Dorsolateral prefrontal cortex (tissue), 120 donors: ENCODE measurements at regions of chr1 and their contacts with region 1.

Region 1: DNA sequence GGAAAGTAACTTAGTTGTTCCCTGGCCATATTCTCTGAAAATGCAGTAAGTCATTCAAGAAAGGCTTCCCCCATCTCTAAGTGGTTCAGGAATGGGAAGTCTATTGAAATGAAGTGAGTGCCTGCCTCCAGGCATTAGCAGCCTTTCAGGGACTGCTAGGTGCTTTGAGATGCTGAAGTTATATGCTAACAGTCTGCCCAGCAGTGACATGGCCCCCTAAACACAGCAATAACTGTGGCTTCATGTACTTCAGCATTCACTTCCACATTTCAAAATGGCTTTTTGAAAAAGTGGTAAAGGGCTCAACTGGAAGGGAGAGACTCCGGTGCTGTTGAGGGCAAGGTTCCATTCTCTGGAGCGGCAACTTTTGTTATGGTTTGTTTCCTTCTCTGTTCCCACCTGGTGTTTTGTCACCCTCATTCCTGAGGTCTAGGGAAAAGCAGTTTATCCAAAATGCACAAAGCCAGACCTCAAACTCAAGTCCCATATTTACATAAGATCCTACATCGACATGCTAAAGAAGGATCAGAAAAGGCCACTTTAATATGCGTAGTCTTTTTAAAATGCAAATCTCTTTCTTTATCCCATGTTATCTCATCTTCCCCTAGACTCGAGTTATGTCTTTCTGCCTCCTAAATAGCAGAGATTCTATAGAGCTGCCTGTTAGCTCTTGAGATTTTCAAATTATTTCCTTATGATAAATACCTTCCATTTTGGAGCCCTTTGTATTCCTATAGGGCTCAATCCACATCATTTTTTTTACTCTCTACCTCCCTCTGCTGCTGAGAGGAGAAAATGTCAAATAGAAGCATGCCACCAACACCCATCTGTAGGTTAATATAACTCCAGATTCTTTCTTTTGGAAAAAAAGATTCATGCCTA is 34.2 kb upstream of the LRRC8C start:
- DNase-seq: no peak
- H3K4me3 ChIP-seq: peak overlapping the region in 2 of 59 donors; percentile 9 to 12
- H3K27ac ChIP-seq: peak overlapping the region in 56 of 59 donors; percentile 1 to 78 (median 53)
- H3K27me3 ChIP-seq: no peaks in the 10 kb centered on the region
- CTCF ChIP-seq: peak; percentile 69 to 93 (median 84)

Region 2: DNA sequence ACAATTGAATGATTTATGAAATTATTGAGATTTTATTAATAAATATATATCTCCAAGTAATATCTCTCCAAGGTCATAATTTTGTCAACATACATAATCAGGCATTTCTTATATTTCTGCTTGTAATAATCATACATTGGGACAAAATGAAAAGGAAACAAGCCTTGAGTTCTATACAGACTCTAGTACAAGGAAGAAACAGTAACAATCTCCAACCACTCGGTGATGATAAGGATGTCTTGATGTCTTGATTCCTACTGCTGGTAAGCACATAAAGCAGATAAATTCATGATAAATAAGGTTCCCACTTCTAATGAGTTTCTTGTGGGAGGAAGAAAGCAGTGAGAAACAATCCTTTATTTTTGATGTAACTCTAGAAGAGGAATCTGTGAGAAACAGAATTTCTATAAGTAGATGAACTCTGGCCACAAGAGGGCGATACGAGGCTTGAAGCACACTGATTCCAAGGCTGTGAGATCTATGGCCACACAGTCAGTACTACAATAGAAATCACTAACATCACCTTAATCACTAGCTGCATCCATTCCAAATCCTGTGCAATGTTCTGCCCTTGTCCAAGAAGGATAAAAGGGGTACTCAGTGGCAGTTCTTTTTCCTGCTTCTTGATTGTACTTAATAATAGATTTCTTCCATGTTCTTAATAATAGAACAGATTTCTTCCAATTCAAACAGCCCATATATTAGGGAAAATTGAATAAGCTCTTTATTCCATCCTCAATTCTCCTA is 115.5 kb before region 1 on chr1:
- intact Hi-C with region 1: loop called (anchors 2 to 5 kb)
- DNase-seq: peak; percentile 55 to 92 (median 76)
- H3K4me3 ChIP-seq: peak overlapping the region in 1 of 59 donors; percentile 6
- H3K27ac ChIP-seq: peak overlapping the region in 6 of 59 donors; percentile 2 to 45 (median 24)
- H3K27me3 ChIP-seq: no peaks in the 10 kb centered on the region
- CTCF ChIP-seq: peak; percentile 72 to 96 (median 88)

Region 3: DNA sequence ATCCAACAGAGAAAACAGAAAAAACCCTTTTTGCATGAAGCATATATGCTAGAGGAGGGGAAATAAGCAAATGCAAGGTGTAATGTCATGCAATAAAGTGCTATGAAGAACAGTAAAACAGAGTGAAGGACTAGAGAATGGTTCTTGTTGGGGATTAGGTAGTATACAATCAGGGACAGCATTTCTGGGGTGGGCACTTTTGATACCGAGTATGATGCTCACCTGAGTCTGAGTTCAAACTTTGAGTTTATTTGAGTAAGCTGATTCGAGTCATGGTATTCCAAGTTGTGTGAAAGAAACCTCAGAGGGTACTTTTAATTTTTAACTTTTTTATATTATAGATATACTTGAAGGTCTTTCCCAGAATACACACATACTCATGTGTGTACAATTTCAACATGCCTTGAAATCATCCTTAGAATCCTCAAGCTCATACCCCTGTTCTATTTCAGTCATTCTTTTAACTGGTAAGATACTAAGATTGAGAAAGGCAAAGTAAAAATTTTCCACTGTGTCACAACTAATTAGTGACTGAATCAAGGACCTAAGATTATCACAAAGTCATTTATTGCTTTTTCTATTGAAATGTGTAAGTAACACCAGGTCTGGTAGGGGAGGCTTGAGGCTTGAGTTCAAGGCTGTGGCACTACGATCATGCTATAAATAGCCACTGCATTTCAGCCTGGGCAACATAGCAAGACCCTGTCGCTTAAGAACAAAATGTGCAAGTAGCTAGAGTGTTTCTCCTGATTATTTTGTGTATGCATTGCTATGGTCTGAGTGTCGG is 61.9 kb before region 1 on chr1:
- intact Hi-C with region 1: no loop called
- DNase-seq: no peak
- H3K4me3 ChIP-seq: no peak overlapping the region
- H3K27ac ChIP-seq: peak overlapping the region in 40 of 59 donors; percentile 0 to 81 (median 48)
- H3K27me3 ChIP-seq: no peaks in the 10 kb centered on the region
- CTCF ChIP-seq: no peak

Region 4: GRCh38 chr1:89632657-89633247 is 34.1 kb after region 1 on chr1 and contains the start of gene LRRC8C:
- intact Hi-C with region 1: loop called (anchors 2 to 5 kb)
- DNase-seq: peak; percentile 39 to 94 (median 78)
- H3K4me3 ChIP-seq: peak within 1 kb of the TSS; percentile 58 to 98 (median 93)
- H3K27ac ChIP-seq: peak within 1 kb of the TSS; percentile 88 to 99 (median 98)
- H3K27me3 ChIP-seq: no peaks in the 10 kb centered on the region
- CTCF ChIP-seq: peak in 44 of 56 donors; percentile 10 to 85 (median 42)
- total RNA-seq, gene LRRC8C: 10.3 to 21.7 (median 16.1) TPM